Dorsolateral prefrontal cortex (tissue), 120 donors: ENCODE measurements at regions of chr19 and their contacts with region 1.

Region 1: DNA sequence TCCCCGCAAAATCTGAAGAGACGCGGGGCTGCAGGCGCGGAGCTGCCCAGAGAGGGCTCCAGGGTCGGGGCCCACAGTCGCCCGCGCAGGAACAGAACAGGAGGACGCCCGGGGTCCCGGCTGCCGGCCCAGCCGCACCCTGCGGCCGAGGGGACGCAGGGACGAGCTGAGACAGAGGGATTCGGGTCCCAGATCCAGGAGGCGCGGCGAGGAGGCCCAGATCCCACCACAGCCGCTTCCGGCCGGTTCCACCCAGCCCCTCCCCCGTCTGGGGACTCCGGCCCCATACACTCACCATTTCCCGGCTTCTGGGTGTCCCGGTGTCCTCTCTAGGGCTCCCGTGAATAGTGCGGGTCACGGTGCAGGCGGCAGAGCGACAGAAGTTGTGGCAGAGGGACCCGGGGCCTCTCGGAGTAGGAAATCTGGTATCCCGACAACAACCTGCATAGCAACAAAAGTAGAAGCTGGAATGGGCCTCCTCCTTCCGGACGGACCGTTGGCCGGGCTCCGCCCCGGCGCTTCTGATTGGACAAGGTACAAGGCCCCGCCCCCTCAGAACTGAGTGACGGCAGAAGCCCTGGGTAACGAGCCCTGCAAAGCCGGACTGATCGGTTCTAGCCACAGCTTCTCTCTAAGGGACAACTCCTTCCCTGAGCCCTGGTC is at the start of gene ZNF20:
- DNase-seq: peak; percentile 94 to 98 (median 96)
- H3K4me3 ChIP-seq: peak within 1 kb of the TSS; percentile 61 to 98 (median 87)
- H3K27ac ChIP-seq: peak within 1 kb of the TSS in 54 of 59 donors; percentile 4 to 92 (median 73)
- H3K27me3 ChIP-seq: no peaks in the 10 kb centered on the region
- CTCF ChIP-seq: peak in 26 of 56 donors; percentile 3 to 56 (median 32)
- total RNA-seq, gene ZNF20: 0.81 to 9.8 (median 3.0) TPM in 119 of 120 experiments, not detected in the other

Region 2: GRCh38 chr19:11673608-11674041 is 466.4 kb before region 1 on chr19:
- intact Hi-C with region 1: loop called in 1 of 2 experiments (anchors 10 kb)
- DNase-seq: peak in 9 of 10 donors; percentile 51 to 78 (median 64)
- H3K4me3 ChIP-seq: peak overlapping the region; percentile 36 to 84 (median 62)
- H3K27ac ChIP-seq: peak overlapping the region in 2 of 59 donors; percentile 53 to 61
- H3K27me3 ChIP-seq: peaks cover 0 to 6% (median 0%) of the 10 kb centered on the region in 45 donors
- CTCF ChIP-seq: peak; percentile 48 to 92 (median 76)

Region 3: GRCh38 chr19:11881151-11881800 is 258.7 kb before region 1 on chr19:
- intact Hi-C with region 1: loop called in 1 of 2 experiments (anchors 5 kb)
- DNase-seq: peak in 7 of 10 donors; percentile 31 to 63 (median 39)
- H3K4me3 ChIP-seq: peak overlapping the region in 9 of 59 donors; percentile 21 to 34 (median 23)
- H3K27ac ChIP-seq: no peak overlapping the region
- H3K27me3 ChIP-seq: no peaks in the 10 kb centered on the region
- CTCF ChIP-seq: peak; percentile 27 to 83 (median 66)

Region 4: DNA sequence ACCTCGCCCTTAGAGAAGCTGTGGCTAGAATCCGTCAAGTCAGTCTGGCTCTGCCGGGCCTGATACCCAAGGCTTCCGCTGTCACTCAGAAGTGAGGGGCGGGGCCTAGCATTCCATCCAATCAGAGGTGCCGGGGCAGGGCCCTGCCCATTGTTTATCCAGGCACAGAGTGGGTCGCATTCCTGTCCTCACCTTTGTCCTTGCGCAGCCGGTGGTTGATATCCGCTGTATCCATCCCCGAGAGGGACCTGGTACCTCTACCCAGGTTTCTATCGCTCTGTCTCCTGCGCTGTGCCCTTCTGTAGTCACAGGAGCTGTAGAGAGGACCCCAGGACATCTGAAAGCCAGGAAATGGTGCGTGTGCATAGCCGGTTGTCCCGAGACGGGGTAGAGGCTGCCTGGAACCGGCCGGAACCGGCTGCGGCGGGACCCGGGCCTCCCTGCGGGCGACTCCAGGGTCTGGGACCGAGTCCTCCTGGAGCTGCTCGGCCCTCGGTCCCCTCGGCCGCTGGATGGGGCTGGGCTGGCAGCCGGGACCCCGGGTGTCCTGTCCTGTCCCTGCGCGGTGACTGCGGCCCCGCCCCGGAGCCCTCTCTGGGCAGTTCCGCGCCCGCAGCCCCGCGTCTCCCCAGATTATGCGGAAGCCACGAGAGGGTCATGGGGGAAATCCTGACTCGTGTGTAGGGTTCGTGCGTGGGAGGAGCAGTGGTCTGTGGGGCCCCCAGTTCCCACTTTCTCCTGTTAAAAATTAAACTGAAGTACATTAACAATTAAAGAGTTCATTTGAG is 175.0 kb before region 1 on chr19 and contains the start of gene ZNF763:
- intact Hi-C with region 1: loop called (anchors 1 to 10 kb)
- DNase-seq: peak; percentile 93 to 98 (median 96)
- H3K4me3 ChIP-seq: peak within 1 kb of the TSS; percentile 54 to 96 (median 81)
- H3K27ac ChIP-seq: peak within 1 kb of the TSS; percentile 75 to 99 (median 96)
- H3K27me3 ChIP-seq: no peaks in the 10 kb centered on the region
- CTCF ChIP-seq: peak in 16 of 56 donors; percentile 0 to 65 (median 22)
- total RNA-seq, gene ZNF763: 1.5 to 12.0 (median 6.0) TPM

Region 5: GRCh38 chr19:12064590-12065538 is 75.2 kb before region 1 on chr19 and contains the start of gene ZNF844:
- intact Hi-C with region 1: loop called in 1 of 2 experiments (anchors 5 kb)
- DNase-seq: peak; percentile 97 to 99 (median 98)
- H3K4me3 ChIP-seq: peak within 1 kb of the TSS; percentile 56 to 95 (median 80)
- H3K27ac ChIP-seq: peak within 1 kb of the TSS; percentile 58 to 97 (median 90)
- H3K27me3 ChIP-seq: no peaks in the 10 kb centered on the region
- CTCF ChIP-seq: peak in 16 of 56 donors; percentile 6 to 42 (median 26)
- total RNA-seq, gene ZNF844: 7.1 to 44.3 (median 13.7) TPM

Region 6: GRCh38 chr19:12163826-12164225 is 23.8 kb after region 1 on chr19:
- intact Hi-C with region 1: no loop called
- DNase-seq: no peak
- H3K4me3 ChIP-seq: peak overlapping the region; percentile 59 to 100 (median 94)
- H3K27ac ChIP-seq: peak overlapping the region in 33 of 59 donors; percentile 10 to 95 (median 84)
- H3K27me3 ChIP-seq: no peaks in the 10 kb centered on the region
- CTCF ChIP-seq: no peak